Transverse colon (tissue), 4 donors: ENCODE measurements at regions of chr4 and their contacts with region 1.

Region 1: GRCh38 chr4:185774845-185775680 is 36.9 kb downstream of the SORBS2 start:
- DNase-seq: no peak
- H3K4me3 ChIP-seq: peak overlapping the region in 3 of 4 donors; percentile 5 to 13 (median 6)
- H3K27ac ChIP-seq: peak overlapping the region; percentile 58 to 62 (median 60)
- H3K4me1 ChIP-seq: peaks cover 5 to 28% (median 20%) of the 10 kb centered on the region in 4 donors
- H3K27me3 ChIP-seq: no peaks in the 10 kb centered on the region
- CTCF ChIP-seq: no peak
- EP300 ChIP-seq: no peak
- POLR2A ChIP-seq: no peak

Region 2: GRCh38 chr4:185381288-185382196 is 393.5 kb before region 1 on chr4:
- in situ Hi-C with region 1: no loop called
- intact Hi-C with region 1: no loop called
- DNase-seq: no peak
- H3K4me3 ChIP-seq: no peak overlapping the region
- H3K27ac ChIP-seq: no peak overlapping the region
- H3K4me1 ChIP-seq: peaks cover 0 to 10% (median 7%) of the 10 kb centered on the region in 4 donors
- H3K27me3 ChIP-seq: no peaks in the 10 kb centered on the region
- CTCF ChIP-seq: no peak
- EP300 ChIP-seq: no peak
- POLR2A ChIP-seq: no peak

Region 3: GRCh38 chr4:185741795-185742194 is 33.3 kb before region 1 on chr4:
- in situ Hi-C with region 1: no loop called
- intact Hi-C with region 1: loop called (anchors 1 kb)
- DNase-seq: no peak
- H3K4me3 ChIP-seq: no peak overlapping the region
- H3K27ac ChIP-seq: no peak overlapping the region
- H3K4me1 ChIP-seq: peaks cover 0 to 14% (median under 1%) of the 10 kb centered on the region in 4 donors
- H3K27me3 ChIP-seq: no peaks in the 10 kb centered on the region
- CTCF ChIP-seq: no peak
- EP300 ChIP-seq: no peak
- POLR2A ChIP-seq: no peak